A549 (cell line): ENCODE measurements at regions of chr6 and their contacts with region 1.

Region 1: DNA sequence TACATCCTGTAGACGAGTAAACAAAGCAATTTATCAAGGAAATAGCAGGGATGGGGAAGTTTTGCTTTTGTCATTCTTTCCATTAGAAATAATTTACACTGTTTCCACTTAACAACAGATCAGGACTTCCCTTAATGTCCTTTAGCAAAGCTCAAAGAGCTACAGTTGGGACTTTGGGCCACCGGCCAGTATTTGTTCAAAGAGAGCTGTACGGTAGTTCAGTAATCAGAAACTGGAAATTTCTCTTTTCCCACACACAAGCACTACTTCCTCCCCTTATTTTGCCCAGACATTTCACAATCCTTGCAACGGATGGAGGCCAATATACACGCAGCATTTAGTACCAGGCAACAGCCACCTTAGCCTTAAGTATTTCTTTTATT is 12.1 kb upstream of the HINT3 start:
- DNase-seq: peak in 1 of 2 experiments; percentile 89
- ATAC-seq: peak; percentile 37 to 40; a peak in 3 of 6 replicates
- H3K4me3 ChIP-seq: no peak overlapping the region
- H3K27ac ChIP-seq: peak overlapping the region; percentile 93 to 98
- H3K4me1 ChIP-seq: peaks cover 96% of the 10 kb centered on the region
- CTCF ChIP-seq: no peak
- EP300 ChIP-seq: peak; percentile 71 to 84; a peak in 3 of 5 replicates
- POLR2A ChIP-seq: no peak
- RAD21 ChIP-seq: no peak; a peak in 1 of 5 replicates

Region 2: GRCh38 chr6:125764121-125764671 is 180.2 kb before region 1 on chr6:
- CTCF ChIA-PET with region 1: no interaction called
- POLR2A ChIA-PET with region 1: no interaction called
- DNase-seq: no peak
- ATAC-seq: no peak
- H3K4me3 ChIP-seq: no peak overlapping the region
- H3K27ac ChIP-seq: no peak overlapping the region
- H3K4me1 ChIP-seq: no peaks in the 10 kb centered on the region
- CTCF ChIP-seq: no peak
- EP300 ChIP-seq: no peak
- POLR2A ChIP-seq: no peak
- RAD21 ChIP-seq: no peak

Region 3: DNA sequence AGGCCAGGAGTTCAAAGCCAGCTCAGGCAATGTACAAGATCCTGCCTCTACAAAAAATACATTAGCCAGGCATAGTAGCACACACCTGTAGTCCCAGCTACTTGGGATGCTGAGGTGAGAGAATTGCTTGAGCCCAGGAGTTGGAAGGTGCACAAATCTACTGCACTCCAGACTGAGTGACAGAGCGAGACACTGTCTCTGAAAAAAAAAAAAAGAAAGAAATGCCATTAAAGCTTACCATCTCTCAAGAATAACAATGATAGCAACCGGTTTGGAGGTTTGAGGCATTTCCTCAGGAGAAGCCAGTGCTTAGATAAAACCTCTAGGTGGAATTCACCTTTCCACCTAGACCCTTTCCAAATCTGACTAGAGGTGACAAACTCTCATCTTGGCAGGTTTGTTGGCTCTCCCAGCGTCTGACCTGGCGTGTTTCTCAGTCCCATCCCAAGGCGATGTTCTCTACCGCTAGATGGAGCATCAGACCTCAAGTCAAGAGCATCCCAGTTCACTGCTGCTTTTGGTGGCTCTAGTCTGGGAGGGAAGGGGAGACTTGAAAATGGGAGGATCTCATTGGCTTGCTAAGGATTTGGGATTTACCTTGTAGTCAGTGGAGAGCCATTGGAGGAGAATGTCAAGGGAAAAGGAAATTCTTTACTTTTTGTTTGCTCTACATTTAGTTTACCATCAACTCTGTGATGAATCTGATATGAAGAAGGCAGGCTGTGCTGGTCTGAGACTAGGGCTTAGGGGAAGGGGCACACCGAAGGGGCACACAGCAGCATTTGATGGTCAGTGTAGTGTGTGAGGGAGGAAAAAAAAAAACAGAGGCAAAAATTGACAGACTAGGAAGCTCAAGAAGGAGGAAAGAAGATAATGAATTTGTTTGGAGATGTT is 85.8 kb before region 1 on chr6:
- CTCF ChIA-PET with region 1: interaction called, 12 read pairs
- POLR2A ChIA-PET with region 1: no interaction called
- DNase-seq: peak; percentile 83 to 85
- ATAC-seq: peak; percentile 100
- H3K4me3 ChIP-seq: no peak overlapping the region
- H3K27ac ChIP-seq: peak overlapping the region; percentile 44 to 68; a peak in 4 of 6 replicates
- H3K4me1 ChIP-seq: peaks cover 18% of the 10 kb centered on the region
- CTCF ChIP-seq: peak; percentile 74
- EP300 ChIP-seq: no peak
- POLR2A ChIP-seq: no peak
- RAD21 ChIP-seq: peak; percentile 83 to 95

Region 4: GRCh38 chr6:125918681-125919566 is 25.5 kb before region 1 on chr6:
- CTCF ChIA-PET with region 1: interaction called, 6 read pairs
- POLR2A ChIA-PET with region 1: interaction called, 20 read pairs
- DNase-seq: peak; percentile 25 to 92
- ATAC-seq: peak; percentile 78 to 79
- H3K4me3 ChIP-seq: peak overlapping the region; percentile 66
- H3K27ac ChIP-seq: peak overlapping the region; percentile 88 to 91
- H3K4me1 ChIP-seq: peaks cover 73% of the 10 kb centered on the region
- CTCF ChIP-seq: no peak
- EP300 ChIP-seq: no peak; a peak in 1 of 5 replicates
- POLR2A ChIP-seq: 0 out of 2 replicates have a peak, but pooled peaks have one; percentile 8
- RAD21 ChIP-seq: no peak

Region 5: DNA sequence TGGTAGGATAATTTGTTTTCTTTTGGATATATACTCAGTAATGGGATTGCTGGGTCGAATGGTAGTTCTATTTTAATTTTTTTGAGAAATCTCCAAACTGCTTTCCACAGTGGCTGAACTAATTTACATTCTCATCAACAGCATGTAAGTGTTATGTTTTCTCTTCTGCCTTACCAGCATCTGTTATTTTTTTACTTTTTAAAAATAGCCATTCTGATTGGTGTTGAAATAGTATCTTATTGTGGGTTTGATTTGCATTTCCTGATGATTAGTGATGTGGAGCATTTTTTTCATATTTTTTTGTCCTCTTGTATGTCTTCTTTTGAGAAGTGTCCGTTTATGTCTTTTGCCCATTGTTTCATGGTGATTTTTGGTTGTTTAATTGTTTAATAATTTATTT is 24.1 kb after region 1 on chr6:
- CTCF ChIA-PET with region 1: no interaction called
- POLR2A ChIA-PET with region 1: no interaction called
- DNase-seq: no peak
- ATAC-seq: no peak
- H3K4me3 ChIP-seq: no peak overlapping the region
- H3K27ac ChIP-seq: no peak overlapping the region
- H3K4me1 ChIP-seq: peaks cover 6% of the 10 kb centered on the region; the same call in 2 of the 3 replicates
- CTCF ChIP-seq: no peak
- EP300 ChIP-seq: no peak
- POLR2A ChIP-seq: no peak
- RAD21 ChIP-seq: no peak

Region 6: DNA sequence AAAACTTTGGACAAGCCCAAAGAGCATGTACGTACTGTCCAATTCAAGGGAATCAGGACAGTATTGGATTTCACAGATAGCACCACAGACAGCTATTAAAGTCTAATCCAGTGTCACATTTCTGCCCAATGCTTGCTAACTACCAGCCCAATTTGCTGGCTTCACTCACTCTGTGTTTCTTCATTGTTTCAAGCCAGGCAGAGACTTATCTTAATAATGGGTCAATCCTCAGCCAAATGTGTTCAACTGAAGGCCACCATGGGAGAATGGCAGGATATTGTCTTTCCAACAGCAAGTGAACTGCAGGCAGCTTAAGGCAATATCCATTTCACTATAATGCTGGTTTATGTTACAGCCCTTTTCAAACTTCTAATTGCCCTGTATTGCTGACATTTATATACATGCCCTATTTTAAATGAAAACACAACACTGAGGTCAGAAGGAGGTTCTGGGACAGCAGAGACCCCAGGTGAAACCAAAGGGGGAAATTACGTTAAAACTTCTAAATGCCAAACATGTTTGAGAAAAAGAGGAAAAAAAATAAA is 1031.9 kb after region 1 on chr6:
- CTCF ChIA-PET with region 1: no interaction called
- POLR2A ChIA-PET with region 1: no interaction called
- DNase-seq: no peak
- ATAC-seq: no peak
- H3K4me3 ChIP-seq: no peak overlapping the region
- H3K27ac ChIP-seq: no peak overlapping the region
- H3K4me1 ChIP-seq: no peaks in the 10 kb centered on the region
- CTCF ChIP-seq: no peak
- EP300 ChIP-seq: no peak
- POLR2A ChIP-seq: no peak
- RAD21 ChIP-seq: no peak